Tibial artery (tissue), 4 donors: ENCODE measurements at regions of chr16 and their contacts with region 1.

Region 1: GRCh38 chr16:68100488-68100887 is 15.3 kb downstream of the NFATC3 start:
- DNase-seq: no peak
- H3K4me3 ChIP-seq: no peak overlapping the region
- H3K27ac ChIP-seq: no peak overlapping the region
- H3K4me1 ChIP-seq: peaks cover 0 to 7% (median 3%) of the 10 kb centered on the region in 4 donors
- H3K27me3 ChIP-seq: no peaks in the 10 kb centered on the region
- CTCF ChIP-seq: no peak

Region 2: DNA sequence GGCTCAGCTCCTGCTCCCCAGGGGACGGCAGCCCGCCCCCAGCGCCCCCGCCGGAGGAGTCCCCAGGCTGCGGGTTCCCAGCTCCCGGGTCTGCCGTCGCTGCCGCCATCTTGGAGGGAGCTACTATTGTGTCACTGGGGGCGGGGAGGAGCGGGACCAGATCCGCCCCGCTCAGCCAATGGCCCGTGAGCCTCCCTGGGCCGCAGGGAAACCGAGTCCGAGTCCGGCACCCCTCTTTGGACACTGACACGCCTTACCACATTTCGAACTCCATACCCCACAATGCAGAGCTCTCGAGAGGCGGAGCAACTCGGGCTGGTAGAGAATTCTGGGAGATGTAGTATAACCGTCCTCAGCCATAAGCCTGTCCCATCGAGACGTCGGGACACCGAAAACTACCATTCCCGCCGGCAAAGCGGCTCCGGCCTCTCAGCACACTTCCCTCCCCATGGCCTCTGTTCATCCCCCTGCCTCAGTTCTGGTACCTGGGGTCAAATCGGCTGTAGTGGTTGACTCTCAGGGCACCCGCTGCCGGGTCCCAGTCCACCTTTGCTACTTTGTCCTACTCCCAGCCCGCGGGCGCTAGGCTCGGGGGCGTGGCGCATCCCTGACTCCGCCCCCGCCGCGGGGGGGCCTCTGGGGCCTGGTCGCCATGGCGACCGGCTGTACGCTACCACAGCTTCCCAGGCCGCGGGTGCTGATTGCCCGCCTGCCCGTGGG is 293.9 kb before region 1 on chr16 and contains the starts of genes RANBP10 and TSNAXIP1:
- intact Hi-C with region 1: no loop called
- DNase-seq: peak; percentile 99
- H3K4me3 ChIP-seq: peak within 1 kb of the TSS; percentile 91
- H3K27ac ChIP-seq: peak within 1 kb of the TSS; percentile 86 to 89
- H3K4me1 ChIP-seq: peaks cover 0 to 25% (median 17%) of the 10 kb centered on the region in 4 donors
- H3K27me3 ChIP-seq: no peaks in the 10 kb centered on the region
- CTCF ChIP-seq: no peak

Region 3: DNA sequence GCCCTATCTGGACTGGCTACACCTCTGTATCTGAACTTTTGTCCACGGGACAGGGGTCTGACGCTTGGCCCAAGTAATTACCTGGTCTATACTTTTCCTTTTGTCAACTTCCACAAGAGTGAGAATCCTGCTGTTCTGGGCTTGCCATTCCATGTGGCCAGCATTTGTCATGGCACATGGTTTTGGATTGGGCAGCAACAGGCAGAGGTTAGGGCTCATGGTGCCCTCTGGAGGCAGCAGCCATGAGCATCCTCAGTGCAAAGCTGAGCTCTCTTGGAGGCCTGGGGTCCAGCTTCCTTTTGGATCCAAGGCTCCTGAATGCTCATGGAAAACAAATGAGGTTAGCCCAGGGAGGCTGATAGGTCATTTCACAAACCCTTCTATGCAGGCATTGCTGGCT is 235.2 kb before region 1 on chr16:
- intact Hi-C with region 1: no loop called
- DNase-seq: no peak
- H3K4me3 ChIP-seq: no peak overlapping the region
- H3K27ac ChIP-seq: peak overlapping the region in 1 of 2 donors; percentile 43
- H3K4me1 ChIP-seq: peaks cover 22 to 47% (median 33%) of the 10 kb centered on the region in 4 donors
- H3K27me3 ChIP-seq: no peaks in the 10 kb centered on the region
- CTCF ChIP-seq: no peak

Region 4: GRCh38 chr16:68155425-68155824 is 54.9 kb after region 1 on chr16:
- intact Hi-C with region 1: loop called (anchors 10 kb)
- DNase-seq: no peak
- H3K4me3 ChIP-seq: no peak overlapping the region
- H3K27ac ChIP-seq: no peak overlapping the region
- H3K4me1 ChIP-seq: no peaks in the 10 kb centered on the region
- H3K27me3 ChIP-seq: no peaks in the 10 kb centered on the region
- CTCF ChIP-seq: no peak

Region 5: GRCh38 chr16:68257906-68258800 is 157.7 kb after region 1 on chr16:
- intact Hi-C with region 1: no loop called
- DNase-seq: peak in 1 of 2 donors; percentile 89
- H3K4me3 ChIP-seq: no peak overlapping the region
- H3K27ac ChIP-seq: peak overlapping the region; percentile 77 to 79
- H3K4me1 ChIP-seq: peaks cover 0 to 20% (median 16%) of the 10 kb centered on the region in 4 donors
- H3K27me3 ChIP-seq: no peaks in the 10 kb centered on the region
- CTCF ChIP-seq: no peak